Prostate gland (tissue), 2 donors: ENCODE measurements at regions of chr18 and their contacts with region 1.

Region 1: GRCh38 chr18:7272311-7273049 is 41.6 kb downstream of the LRRC30 start:
- DNase-seq: peak; percentile 64
- H3K4me3 ChIP-seq: peak overlapping the region in 1 of 2 donors; percentile 6
- H3K27ac ChIP-seq: peak overlapping the region in 1 of 2 donors; percentile 45
- H3K4me1 ChIP-seq: no peaks in the 10 kb centered on the region
- H3K27me3 ChIP-seq: no peaks in the 10 kb centered on the region
- CTCF ChIP-seq: peak; percentile 26 to 69 (median 54)
- POLR2A ChIP-seq: no peak

Region 2: GRCh38 chr18:7000484-7001096 is 271.9 kb before region 1 on chr18:
- intact Hi-C with region 1: no loop called
- DNase-seq: peak; percentile 37
- H3K4me3 ChIP-seq: no peak overlapping the region
- H3K27ac ChIP-seq: peak overlapping the region; percentile 34 to 47
- H3K4me1 ChIP-seq: peaks cover 2% of the 10 kb centered on the region
- H3K27me3 ChIP-seq: no peaks in the 10 kb centered on the region
- CTCF ChIP-seq: peak; percentile 10 to 69 (median 58)
- POLR2A ChIP-seq: no peak

Region 3: GRCh38 chr18:7452331-7452730 is 179.9 kb after region 1 on chr18:
- intact Hi-C with region 1: loop called (anchors 10 kb)
- DNase-seq: no peak
- H3K4me3 ChIP-seq: no peak overlapping the region
- H3K27ac ChIP-seq: no peak overlapping the region
- H3K4me1 ChIP-seq: no peaks in the 10 kb centered on the region
- H3K27me3 ChIP-seq: no peaks in the 10 kb centered on the region
- CTCF ChIP-seq: peak in 2 of 4 experiments; percentile 32 to 45
- POLR2A ChIP-seq: no peak

Region 4: DNA sequence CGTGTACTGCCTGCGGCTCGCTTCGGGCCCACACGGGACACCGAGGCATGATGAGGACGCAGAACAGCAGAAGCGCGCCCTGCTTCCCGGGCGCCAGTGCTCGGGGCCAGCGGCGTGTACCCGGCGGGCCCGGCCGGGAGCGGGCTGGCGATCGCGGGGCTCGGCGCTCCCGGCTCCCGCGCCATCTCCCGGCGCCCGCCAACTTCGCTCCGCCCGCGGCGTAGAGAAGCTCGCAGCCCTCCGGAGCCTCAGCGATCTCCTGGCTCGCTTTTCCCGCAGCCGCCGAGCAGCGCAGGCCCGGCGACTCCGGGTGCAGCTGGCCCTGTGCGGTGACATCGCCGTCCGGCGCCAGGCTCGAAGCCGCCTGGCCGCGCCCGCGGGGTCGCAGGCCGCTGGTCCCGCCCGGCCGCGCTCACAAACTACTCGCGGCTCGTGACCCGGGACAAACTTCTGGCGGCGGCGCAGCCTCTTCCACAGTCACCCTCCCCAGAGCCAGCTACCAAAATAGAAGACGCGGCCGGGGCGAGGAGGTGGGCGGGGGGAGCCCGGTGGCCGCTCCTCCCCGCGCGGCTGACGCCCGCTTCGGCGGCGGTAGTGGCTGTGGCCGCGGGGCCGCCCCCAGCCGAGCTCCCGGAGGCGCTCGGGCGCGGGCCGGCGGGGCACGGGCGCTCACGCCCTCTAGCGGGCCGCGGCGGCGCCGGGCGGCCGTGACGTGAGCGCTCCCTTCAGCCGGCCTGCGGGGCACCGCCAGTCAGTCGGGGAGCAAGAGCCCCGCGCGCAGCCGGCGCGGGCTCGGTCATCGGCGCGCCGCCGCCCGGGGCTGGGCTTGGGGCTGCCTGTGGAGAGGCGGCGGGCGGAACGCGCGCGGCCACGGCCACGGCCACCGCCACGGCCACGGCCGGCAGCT is 294.3 kb after region 1 on chr18 and contains the start of gene PTPRM:
- intact Hi-C with region 1: loop called (anchors 1 kb)
- DNase-seq: peak; percentile 80
- H3K4me3 ChIP-seq: peak within 1 kb of the TSS; percentile 79 to 82
- H3K27ac ChIP-seq: peak within 1 kb of the TSS; percentile 90 to 97
- H3K4me1 ChIP-seq: no peaks in the 10 kb centered on the region
- H3K27me3 ChIP-seq: no peaks in the 10 kb centered on the region
- CTCF ChIP-seq: peak; percentile 10 to 94 (median 64)
- POLR2A ChIP-seq: peak; percentile 54
- total RNA-seq, gene PTPRM: 32.9 to 92.6 TPM

Region 5: GRCh38 chr18:7755753-7756475 is 483.4 kb after region 1 on chr18:
- intact Hi-C with region 1: loop called (anchors 10 kb)
- DNase-seq: no peak
- H3K4me3 ChIP-seq: no peak overlapping the region
- H3K27ac ChIP-seq: peak overlapping the region in 1 of 2 donors; percentile 49
- H3K4me1 ChIP-seq: peaks cover 7% of the 10 kb centered on the region
- H3K27me3 ChIP-seq: no peaks in the 10 kb centered on the region
- CTCF ChIP-seq: peak in 3 of 4 experiments; percentile 8 to 53 (median 46)
- POLR2A ChIP-seq: no peak

Region 6: DNA sequence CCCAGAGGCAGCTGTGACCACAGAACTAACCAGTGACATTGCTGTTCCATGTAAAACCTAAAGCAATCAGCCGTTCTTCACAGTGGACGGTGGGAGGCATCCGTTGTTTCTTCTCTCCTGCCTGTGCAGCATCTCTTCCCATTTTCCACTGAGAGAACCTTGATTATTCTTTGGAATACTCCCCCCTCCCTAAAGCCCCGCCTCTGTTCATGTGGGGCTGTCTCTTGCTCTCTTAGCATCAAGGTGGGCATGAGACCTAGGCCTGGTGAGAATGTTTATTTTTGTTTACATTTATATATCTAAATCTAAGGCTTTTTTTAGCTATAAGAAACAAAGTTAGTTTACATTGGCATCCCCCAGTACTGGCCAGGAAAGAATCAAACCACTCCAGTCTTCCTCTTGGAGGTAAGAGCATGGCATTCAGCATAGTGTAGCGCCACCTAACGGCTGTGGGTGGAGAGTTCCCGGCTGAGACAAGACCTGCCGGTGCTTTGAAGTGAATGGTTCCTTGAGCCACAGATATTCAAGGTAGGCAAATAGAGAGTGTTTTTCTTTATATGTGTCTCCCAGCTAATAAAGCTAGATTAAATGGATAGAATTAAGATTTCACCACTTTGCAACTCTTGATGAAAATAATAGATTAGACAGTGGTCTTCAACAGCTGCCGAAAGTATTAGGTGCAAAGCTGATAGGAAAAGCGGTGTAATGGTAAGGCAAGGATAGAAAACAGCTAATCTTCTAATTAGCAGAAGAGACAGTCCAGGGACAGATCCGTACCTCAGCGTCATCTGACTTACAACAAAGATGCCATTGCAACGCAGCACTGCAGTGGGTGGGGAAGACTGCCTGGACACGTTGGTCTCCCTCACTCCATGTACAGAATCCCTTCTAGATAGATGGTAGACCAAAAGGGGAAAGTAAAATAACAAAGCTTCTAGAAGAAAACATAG is 1117.2 kb after region 1 on chr18:
- intact Hi-C with region 1: loop called (anchors 10 kb)
- DNase-seq: peak; percentile 69
- H3K4me3 ChIP-seq: no peak overlapping the region
- H3K27ac ChIP-seq: no peak overlapping the region
- H3K4me1 ChIP-seq: no peaks in the 10 kb centered on the region
- H3K27me3 ChIP-seq: no peaks in the 10 kb centered on the region
- CTCF ChIP-seq: peak in 3 of 4 experiments; percentile 77 to 81 (median 80)
- POLR2A ChIP-seq: no peak

Region 7: DNA sequence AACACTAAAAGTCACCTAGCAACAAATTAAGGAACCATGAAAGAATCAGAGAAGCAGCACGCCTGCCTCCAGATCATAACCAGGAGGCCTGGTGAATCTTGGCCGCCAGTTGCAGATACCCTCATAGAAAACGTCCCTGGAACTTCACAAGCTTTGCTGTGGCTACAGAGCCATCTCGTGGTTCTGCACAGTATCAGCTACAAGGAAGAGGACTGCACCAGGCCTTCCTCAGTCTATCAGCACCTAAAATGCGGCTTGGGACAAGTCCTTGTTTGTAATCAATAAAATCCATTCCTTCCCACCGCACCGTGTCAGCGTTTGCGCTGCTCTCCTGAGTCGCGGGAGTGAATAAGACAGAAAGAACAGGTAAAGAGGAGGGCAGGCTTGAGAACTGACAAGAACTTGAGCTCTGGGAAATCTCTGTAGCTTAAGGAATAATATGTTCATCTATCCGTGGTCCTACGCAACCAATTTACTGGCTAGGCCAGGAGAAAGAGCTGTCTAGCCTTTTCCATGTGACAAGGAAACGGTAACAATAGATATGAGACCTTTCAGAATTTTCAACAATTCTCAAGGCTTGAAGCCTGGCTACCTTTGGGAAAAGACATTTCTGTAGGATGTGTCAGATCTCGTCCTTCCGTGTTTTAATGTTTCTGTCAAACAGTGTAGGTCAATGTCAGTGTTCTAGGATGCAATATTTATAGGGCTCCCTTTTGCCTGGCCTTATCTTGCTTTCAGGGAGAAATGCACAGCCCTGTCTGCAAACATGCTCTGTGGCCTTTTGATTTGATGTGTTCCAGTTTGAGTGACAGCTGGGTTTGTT is 1208.2 kb after region 1 on chr18:
- intact Hi-C with region 1: loop called (anchors 2 kb)
- DNase-seq: peak; percentile 48
- H3K4me3 ChIP-seq: no peak overlapping the region
- H3K27ac ChIP-seq: no peak overlapping the region
- H3K4me1 ChIP-seq: no peaks in the 10 kb centered on the region
- H3K27me3 ChIP-seq: no peaks in the 10 kb centered on the region
- CTCF ChIP-seq: peak in 3 of 4 experiments; percentile 43 to 59 (median 55)
- POLR2A ChIP-seq: no peak